ENCODE measurements at regions of chr6 and their contacts with region 1.

Region 1: DNA sequence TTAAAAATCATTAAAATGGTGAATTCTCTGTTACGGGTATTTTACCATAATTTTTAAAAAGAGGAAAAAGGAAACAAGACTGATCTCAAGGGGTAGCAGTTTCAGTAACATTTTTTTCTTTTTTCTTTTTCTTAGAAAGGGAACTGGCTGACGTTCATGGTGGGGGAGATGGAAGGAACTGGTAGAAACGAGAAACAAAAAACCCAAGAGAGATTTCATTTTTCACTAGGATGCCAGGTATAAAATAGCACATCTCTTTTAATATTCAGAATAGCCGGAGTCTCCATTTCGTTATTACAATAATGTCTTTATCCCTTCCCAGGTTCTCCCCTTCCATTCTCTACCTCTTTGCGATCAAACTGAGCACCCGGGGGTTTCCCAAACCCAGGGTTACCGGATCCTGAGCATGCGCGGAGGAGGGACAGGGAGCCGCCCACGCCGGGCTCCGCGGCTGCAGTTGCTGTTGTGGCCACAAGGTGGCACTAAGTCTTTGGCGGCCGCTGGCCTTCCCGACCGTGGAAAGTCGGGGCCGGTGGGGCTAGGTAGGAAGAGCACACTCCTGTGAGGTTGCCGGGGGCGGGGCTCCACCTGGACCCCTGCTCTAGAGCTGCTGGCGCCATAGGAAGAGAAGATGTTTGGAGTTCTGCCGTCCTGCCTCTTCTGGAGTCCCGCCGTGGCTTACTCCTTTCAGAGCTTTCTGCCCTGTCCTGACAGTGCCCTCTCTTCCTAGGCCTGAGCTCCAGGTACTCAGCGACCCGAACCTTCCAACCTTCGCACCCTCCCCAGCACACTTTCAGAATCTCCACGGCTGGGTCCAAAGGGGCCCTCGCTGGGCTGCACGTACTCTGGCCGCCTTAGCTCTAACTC is 146.8 kb downstream of the SH3BGRL2 start:
- DNase-seq: peak; percentile 92
- ATAC-seq: peak; percentile 93
- H3K4me3 Mint-ChIP-seq: peak overlapping the region; percentile 69
- H3K27ac Mint-ChIP-seq: peak overlapping the region; percentile 80
- H3K4me1 Mint-ChIP-seq: peaks cover 10% of the 10 kb centered on the region
- H3K27me3 Mint-ChIP-seq: peaks cover 2% of the 10 kb centered on the region
- CTCF ChIP-seq: peak; percentile 92

Region 2: GRCh38 chr6:79789843-79790242 is 11.9 kb after region 1 on chr6:
- CTCF ChIA-PET with region 1: interaction called, 12 read pairs
- POLR2A ChIA-PET with region 1: interaction called, 4 read pairs
- intact Hi-C with region 1: no loop called
- DNase-seq: no peak
- ATAC-seq: no peak
- H3K4me3 Mint-ChIP-seq: no peak overlapping the region
- H3K27ac Mint-ChIP-seq: no peak overlapping the region
- H3K4me1 Mint-ChIP-seq: no peaks in the 10 kb centered on the region
- H3K27me3 Mint-ChIP-seq: peaks cover 6% of the 10 kb centered on the region
- CTCF ChIP-seq: no peak

Region 3: GRCh38 chr6:79869600-79870084 is 91.7 kb after region 1 on chr6:
- CTCF ChIA-PET with region 1: interaction called, 18 read pairs
- POLR2A ChIA-PET with region 1: no interaction called
- intact Hi-C with region 1: loop called (anchors 2 kb)
- DNase-seq: peak; percentile 84
- ATAC-seq: peak; percentile 100
- H3K4me3 Mint-ChIP-seq: peak overlapping the region; percentile 12
- H3K27ac Mint-ChIP-seq: peak overlapping the region; percentile 47
- H3K4me1 Mint-ChIP-seq: peaks cover 9% of the 10 kb centered on the region
- H3K27me3 Mint-ChIP-seq: peaks cover 4% of the 10 kb centered on the region
- CTCF ChIP-seq: peak; percentile 79

Measured in activated CD8-positive, alpha-beta T cell treated with anti-CD3 and anti-CD28 coated beads for 36 hours (primary cell).